HepG2 (cell line): ENCODE measurements at regions of chrX and their contacts with region 1.

Region 1: DNA sequence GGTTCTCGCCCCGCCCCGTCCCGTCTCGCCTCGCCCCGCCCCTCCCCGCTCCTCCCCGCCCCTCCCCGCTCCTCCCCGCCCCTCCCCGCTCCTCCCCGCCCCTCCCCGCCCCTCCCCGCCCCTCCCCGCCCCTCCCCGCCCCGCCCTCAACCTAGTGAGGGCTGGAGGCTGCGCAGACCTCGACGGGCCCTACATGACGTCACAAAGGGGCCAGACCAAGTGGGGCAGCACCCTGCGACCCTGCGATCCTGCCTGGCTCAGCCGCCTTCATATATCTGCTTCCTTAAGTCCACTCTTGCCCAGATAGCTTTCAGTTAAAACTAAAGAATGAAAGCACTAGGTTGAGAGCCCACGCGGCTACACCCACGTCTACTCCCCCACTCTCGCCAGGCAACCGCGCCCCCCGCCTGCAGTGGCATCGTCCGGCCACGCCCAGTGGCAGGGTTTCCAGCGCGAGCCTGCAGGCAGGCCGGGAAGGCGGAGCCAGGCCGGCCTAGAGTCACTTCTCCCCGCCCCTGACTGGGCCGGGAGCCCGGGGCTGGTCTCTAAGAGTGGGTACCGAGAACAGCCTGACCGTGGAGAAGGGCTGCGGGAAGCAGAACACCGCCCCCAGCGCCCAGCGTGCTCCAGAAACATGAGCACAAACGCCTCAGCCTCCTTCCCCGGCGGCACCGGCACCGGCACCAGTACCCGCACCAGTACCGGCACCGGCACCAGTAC is 1.5 kb upstream of the MAOA start:
- DNase-seq: peak; percentile 85
- ATAC-seq: peak; percentile 98
- H3K4me3 ChIP-seq: peak overlapping the region; percentile 74 to 79 (median 78); a peak in 4 of 6 replicates
- H3K27ac ChIP-seq: peak overlapping the region; percentile 82
- H3K4me1 ChIP-seq: no peaks in the 10 kb centered on the region
- H3K27me3 ChIP-seq: no peaks in the 10 kb centered on the region
- CTCF ChIP-seq: peak; percentile 59
- EP300 ChIP-seq: no peak
- POLR2A ChIP-seq: peak; percentile 46 to 68; a peak in 3 of 4 replicates
- RAD21 ChIP-seq: no peak; the same call in 1 of the 2 replicates

Region 2: DNA sequence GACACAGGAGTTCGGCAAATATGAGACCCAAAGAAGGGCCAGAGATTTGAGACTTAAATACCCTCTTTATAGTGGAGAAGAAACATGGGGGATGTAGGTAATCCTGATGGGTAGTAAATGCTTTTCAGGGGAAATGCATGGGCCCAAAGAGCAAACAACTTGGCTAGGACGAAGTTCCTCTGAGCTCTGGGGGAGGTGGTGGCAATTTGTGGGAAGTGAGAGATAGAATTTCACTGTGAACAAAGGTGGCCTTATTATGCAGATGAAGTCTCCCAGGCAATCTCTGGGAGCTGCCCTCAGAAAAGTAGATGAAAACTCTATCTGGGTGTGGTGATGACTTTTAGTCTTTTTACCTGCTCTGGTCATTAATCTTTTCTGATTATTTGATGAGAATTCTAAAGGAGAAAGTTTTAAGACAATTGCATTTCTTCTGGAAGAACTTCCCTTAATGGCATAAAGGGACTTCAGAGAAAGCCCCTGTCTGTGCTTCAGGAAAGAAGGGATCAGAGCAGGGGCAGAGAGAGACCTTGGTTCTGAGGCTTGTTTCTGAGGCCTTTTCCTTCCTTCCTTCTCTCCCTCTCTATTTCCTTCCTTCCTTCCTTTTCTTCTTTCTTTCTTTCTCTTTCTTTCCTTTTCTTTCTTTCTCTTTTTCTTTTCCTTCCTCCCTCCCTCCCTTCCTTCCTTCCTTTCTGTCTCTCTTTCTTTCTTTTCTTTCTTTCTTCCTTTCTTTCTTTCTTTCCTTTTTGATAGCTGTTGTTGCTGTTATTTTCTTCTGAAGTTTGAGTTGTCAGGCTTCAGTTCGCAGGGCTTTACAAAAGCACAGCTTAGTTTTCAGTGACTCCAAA is 36.0 kb before region 1 on chrX:
- CTCF ChIA-PET with region 1: no interaction called
- POLR2A ChIA-PET with region 1: no interaction called
- in situ Hi-C with region 1: no loop called
- intact Hi-C with region 1: loop called (anchors 1 kb)
- DNase-seq: peak; percentile 40
- ATAC-seq: peak; percentile 87
- H3K4me3 ChIP-seq: no peak overlapping the region
- H3K27ac ChIP-seq: peak overlapping the region; percentile 51
- H3K4me1 ChIP-seq: peaks cover 31% of the 10 kb centered on the region
- H3K27me3 ChIP-seq: no peaks in the 10 kb centered on the region
- CTCF ChIP-seq: no peak
- EP300 ChIP-seq: no peak
- POLR2A ChIP-seq: no peak
- RAD21 ChIP-seq: no peak

Region 3: GRCh38 chrX:43703211-43703791 is 48.7 kb after region 1 on chrX:
- CTCF ChIA-PET with region 1: no interaction called
- POLR2A ChIA-PET with region 1: interaction called, 17 read pairs
- in situ Hi-C with region 1: loop called (anchors 5 kb)
- intact Hi-C with region 1: no loop called
- DNase-seq: peak; percentile 48
- ATAC-seq: peak; percentile 44; the same call in 2 of the 3 replicates
- H3K4me3 ChIP-seq: 0 out of 6 replicates have a peak overlapping the region, but pooled peaks of 1 of the 3 experiments have one; percentile 23
- H3K27ac ChIP-seq: peak overlapping the region; percentile 93
- H3K4me1 ChIP-seq: peaks cover 62% of the 10 kb centered on the region
- H3K27me3 ChIP-seq: no peaks in the 10 kb centered on the region
- CTCF ChIP-seq: no peak
- EP300 ChIP-seq: no peak
- POLR2A ChIP-seq: no peak
- RAD21 ChIP-seq: no peak

Region 4: DNA sequence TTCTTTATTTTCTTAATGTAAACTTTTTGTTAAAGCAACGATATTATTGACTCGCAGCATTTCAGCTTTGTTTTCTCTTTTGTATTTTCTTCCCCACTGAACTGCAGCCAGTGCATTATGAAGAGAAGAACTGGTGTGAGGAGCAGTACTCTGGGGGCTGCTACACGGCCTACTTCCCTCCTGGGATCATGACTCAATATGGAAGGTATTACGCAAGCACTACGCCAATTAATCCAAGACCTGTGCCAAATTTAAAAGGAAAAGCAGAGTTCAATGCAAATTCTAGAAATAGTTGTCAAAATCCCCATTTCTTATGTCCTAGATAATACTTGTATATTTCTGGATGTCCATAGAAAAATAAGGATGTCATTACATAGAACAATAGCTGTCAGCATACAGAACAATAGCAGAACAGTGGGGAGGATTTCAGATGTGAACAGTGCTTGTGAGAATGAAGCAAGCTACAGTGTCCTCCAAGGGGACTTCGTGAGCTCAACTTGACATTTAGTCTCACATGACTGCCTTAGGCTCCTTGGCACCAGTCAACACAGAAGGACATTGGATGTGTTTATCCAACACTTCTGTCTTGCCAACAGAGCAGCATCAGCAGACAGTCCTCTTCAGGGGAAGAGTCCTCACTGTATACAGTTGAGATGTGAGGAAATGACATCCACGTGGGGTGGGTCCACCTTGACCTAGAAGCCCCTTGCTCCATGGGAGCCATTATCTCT is 87.4 kb after region 1 on chrX:
- CTCF ChIA-PET with region 1: no interaction called
- POLR2A ChIA-PET with region 1: no interaction called
- in situ Hi-C with region 1: loop called (anchors 10 kb)
- intact Hi-C with region 1: no loop called
- DNase-seq: no peak
- ATAC-seq: no peak
- H3K4me3 ChIP-seq: no peak overlapping the region
- H3K27ac ChIP-seq: no peak overlapping the region
- H3K4me1 ChIP-seq: no peaks in the 10 kb centered on the region
- H3K27me3 ChIP-seq: no peaks in the 10 kb centered on the region
- CTCF ChIP-seq: no peak
- EP300 ChIP-seq: no peak
- POLR2A ChIP-seq: no peak
- RAD21 ChIP-seq: no peak